CD4-positive, alpha-beta memory T cell (primary cell): ENCODE measurements at regions of chr20 and their contacts with region 1.

Region 1: DNA sequence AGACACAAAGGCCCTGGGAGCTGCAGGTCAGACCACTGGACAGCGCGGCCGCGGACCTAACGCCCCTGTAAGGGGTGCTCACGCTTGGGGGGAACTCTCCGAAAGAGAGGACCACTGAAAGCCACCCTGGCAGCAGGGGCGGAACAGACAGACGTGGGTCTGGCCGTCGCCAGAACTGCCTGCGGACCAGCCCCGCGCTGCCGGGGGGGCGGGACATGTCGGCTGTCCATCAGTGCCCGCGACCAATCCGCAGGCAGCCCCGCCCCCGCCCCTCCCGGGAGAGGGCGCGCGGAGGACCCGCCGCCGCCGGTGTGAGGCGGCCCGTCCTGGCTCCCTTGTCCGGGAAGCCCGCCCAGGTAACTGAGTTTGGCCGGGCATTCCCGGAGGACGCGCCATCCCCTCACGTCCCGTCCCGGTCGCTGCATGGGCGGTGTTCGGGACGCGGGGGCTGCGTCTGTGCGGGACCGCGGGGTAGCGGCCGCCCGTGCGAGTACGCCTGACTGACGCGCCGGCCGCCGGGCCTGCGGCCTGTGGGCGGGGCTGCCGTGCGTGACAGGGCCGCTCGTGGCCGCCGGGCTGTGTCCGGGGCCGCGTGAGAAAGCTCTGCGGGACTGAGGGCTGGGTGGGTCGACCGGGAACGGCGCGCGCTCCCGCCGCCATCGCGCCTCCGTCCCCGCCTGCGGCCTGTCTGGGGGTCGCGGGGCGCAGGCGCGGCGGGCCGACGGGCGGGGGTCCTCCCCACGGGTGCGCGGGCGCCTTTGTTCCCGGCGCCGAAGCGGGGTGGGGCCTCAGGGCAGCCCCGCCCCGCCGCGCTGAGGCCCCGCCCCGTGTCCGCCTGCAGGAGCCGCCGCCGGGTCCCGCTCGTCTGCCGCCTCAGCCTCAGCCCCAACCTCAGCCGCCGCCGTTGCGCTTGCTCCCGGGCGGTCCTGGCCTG is at the start of gene PLCG1:
- DNase-seq: peak; percentile 79 to 87 (median 82)
- H3K4me3 ChIP-seq: peak within 1 kb of the TSS; percentile 82
- H3K4me3 Mint-ChIP-seq: peak within 1 kb of the TSS; percentile 93 to 99 (median 96)
- H3K27ac ChIP-seq: peak within 1 kb of the TSS; percentile 84
- H3K27ac Mint-ChIP-seq: peak within 1 kb of the TSS; percentile 89 to 98 (median 95)
- H3K4me1 ChIP-seq: peaks cover 65% of the 10 kb centered on the region
- H3K4me1 Mint-ChIP-seq: peaks cover 43 to 70% (median 62%) of the 10 kb centered on the region in 4 donors
- H3K27me3 ChIP-seq: no peaks in the 10 kb centered on the region
- H3K27me3 Mint-ChIP-seq: no peaks in the 10 kb centered on the region
- total RNA-seq, gene PLCG1: 319 to 320 TPM

Region 2: DNA sequence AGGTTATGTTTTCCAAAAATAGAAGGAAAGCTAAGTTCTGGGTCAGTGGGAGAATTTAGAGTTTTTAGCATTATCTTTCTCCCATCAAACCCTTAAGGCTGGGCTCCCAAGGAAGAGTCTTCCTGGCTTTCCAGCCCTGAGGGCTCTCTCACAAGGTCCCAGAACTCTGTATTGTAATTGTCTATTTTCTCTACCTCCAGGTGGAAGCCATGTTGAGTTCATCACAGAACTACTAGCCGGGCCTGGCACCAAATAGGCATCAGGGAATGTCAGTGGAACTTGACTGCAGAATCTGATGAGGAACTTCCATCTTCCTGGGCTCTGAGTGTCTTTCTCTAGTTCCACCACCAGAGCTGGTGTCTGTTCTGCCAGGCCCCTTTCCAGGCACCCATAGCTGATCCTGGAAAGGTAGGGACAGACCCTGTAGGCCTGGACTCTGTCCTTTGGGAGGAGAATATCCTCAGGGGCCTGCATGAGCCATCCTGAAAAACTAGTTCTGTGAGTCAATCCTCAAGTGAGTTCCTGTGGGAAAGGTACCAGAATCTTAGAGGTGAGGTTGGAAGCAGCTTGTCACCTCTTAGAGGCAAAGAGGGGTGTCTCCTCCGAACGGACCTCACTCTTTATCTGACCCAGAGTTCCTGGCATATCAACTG is 119.4 kb before region 1 on chr20:
- CTCF ChIA-PET with region 1: no interaction called
- POLR2A ChIA-PET with region 1: no interaction called
- intact Hi-C with region 1: no loop called
- DNase-seq: no peak
- H3K4me3 ChIP-seq: no peak overlapping the region
- H3K4me3 Mint-ChIP-seq: no peak overlapping the region
- H3K27ac ChIP-seq: no peak overlapping the region
- H3K27ac Mint-ChIP-seq: no peak overlapping the region
- H3K4me1 ChIP-seq: no peaks in the 10 kb centered on the region
- H3K4me1 Mint-ChIP-seq: peaks cover 0 to 5% (median 3%) of the 10 kb centered on the region in 4 donors
- H3K27me3 ChIP-seq: no peaks in the 10 kb centered on the region
- H3K27me3 Mint-ChIP-seq: peaks cover 0 to 3% of the 10 kb centered on the region in 2 donors

Region 3: GRCh38 chr20:41057999-41058896 is 78.7 kb before region 1 on chr20:
- CTCF ChIA-PET with region 1: no interaction called
- POLR2A ChIA-PET with region 1: no interaction called
- intact Hi-C with region 1: no loop called
- DNase-seq: no peak
- H3K4me3 ChIP-seq: no peak overlapping the region
- H3K4me3 Mint-ChIP-seq: no peak overlapping the region
- H3K27ac ChIP-seq: no peak overlapping the region
- H3K27ac Mint-ChIP-seq: peak overlapping the region in 1 of 7 donors; percentile 60
- H3K4me1 ChIP-seq: peaks cover 30% of the 10 kb centered on the region
- H3K4me1 Mint-ChIP-seq: peaks cover 45 to 75% (median 60%) of the 10 kb centered on the region in 4 donors
- H3K27me3 ChIP-seq: no peaks in the 10 kb centered on the region
- H3K27me3 Mint-ChIP-seq: no peaks in the 10 kb centered on the region

Region 4: DNA sequence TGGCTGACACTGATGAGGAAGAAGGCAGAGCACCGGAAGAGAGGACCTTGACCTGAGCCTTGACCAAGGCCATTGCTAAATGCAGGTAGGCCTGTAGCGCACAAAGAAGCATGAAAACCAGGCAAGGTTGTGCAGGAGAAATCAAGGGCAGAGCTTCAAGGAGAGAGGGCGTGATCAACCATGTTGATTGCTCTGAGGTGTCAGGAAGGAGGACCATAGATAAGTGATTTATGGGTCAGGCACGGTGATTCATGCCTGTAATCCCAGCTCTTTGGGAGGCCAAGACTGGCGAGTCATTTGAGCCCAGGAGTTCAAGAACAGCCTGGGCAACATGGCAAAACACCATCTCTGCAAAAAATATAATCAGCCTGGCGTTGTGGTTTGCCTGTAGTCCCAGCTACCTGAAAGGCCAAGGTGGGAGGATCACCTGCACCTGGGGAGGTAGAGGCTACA is 12.8 kb after region 1 on chr20:
- CTCF ChIA-PET with region 1: interaction called, 178 read pairs
- POLR2A ChIA-PET with region 1: interaction called, 753 read pairs
- intact Hi-C with region 1: loop called (anchors 1 kb)
- DNase-seq: peak in 1 of 5 donors; percentile 38
- H3K4me3 ChIP-seq: no peak overlapping the region
- H3K4me3 Mint-ChIP-seq: peak overlapping the region in 7 of 8 donors; percentile 32 to 97 (median 63)
- H3K27ac ChIP-seq: peak overlapping the region; percentile 46
- H3K27ac Mint-ChIP-seq: peak overlapping the region; percentile 92 to 98 (median 96)
- H3K4me1 ChIP-seq: peaks cover 100% of the 10 kb centered on the region
- H3K4me1 Mint-ChIP-seq: peaks cover 84 to 100% (median 92%) of the 10 kb centered on the region in 4 donors
- H3K27me3 ChIP-seq: no peaks in the 10 kb centered on the region
- H3K27me3 Mint-ChIP-seq: no peaks in the 10 kb centered on the region

Region 5: GRCh38 chr20:41167481-41168253 is 30.7 kb after region 1 on chr20:
- CTCF ChIA-PET with region 1: interaction called, 69 read pairs
- POLR2A ChIA-PET with region 1: interaction called, 22 read pairs
- intact Hi-C with region 1: no loop called
- DNase-seq: no peak
- H3K4me3 ChIP-seq: no peak overlapping the region
- H3K4me3 Mint-ChIP-seq: no peak overlapping the region
- H3K27ac ChIP-seq: peak overlapping the region; percentile 22
- H3K27ac Mint-ChIP-seq: peak overlapping the region; percentile 36 to 98 (median 73)
- H3K4me1 ChIP-seq: peaks cover 16% of the 10 kb centered on the region
- H3K4me1 Mint-ChIP-seq: peaks cover 5 to 58% (median 32%) of the 10 kb centered on the region in 4 donors
- H3K27me3 ChIP-seq: no peaks in the 10 kb centered on the region
- H3K27me3 Mint-ChIP-seq: no peaks in the 10 kb centered on the region

Region 6: DNA sequence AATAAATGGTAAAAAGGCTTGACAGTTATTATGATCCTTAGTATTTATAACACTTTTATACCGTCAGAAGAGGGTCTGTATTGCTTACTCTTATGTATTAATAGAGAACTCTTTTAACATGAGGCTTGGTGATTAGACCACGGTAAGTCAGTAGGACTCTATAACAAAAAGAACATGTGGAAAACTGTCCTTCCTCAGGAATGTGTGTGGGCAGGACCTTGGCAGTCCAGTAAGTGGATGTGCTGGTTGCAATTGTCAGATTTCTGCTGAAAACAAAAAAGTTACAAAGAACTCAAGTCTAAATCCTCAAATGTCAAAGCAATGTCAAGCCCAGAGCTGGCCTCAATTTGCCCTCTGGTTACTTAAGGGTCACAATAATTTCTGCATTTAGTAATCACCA is 81.5 kb after region 1 on chr20:
- CTCF ChIA-PET with region 1: interaction called, 42 read pairs
- POLR2A ChIA-PET with region 1: interaction called, 3 read pairs
- intact Hi-C with region 1: no loop called
- DNase-seq: no peak
- H3K4me3 ChIP-seq: no peak overlapping the region
- H3K4me3 Mint-ChIP-seq: no peak overlapping the region
- H3K27ac ChIP-seq: no peak overlapping the region
- H3K27ac Mint-ChIP-seq: no peak overlapping the region
- H3K4me1 ChIP-seq: no peaks in the 10 kb centered on the region
- H3K4me1 Mint-ChIP-seq: no peaks in the 10 kb centered on the region
- H3K27me3 ChIP-seq: no peaks in the 10 kb centered on the region
- H3K27me3 Mint-ChIP-seq: no peaks in the 10 kb centered on the region

Region 7: GRCh38 chr20:41242807-41243206 is 105.9 kb after region 1 on chr20:
- CTCF ChIA-PET with region 1: interaction called, 22 read pairs
- POLR2A ChIA-PET with region 1: no interaction called
- intact Hi-C with region 1: no loop called
- DNase-seq: no peak
- H3K4me3 ChIP-seq: no peak overlapping the region
- H3K4me3 Mint-ChIP-seq: peak overlapping the region in 1 of 8 donors; percentile 10
- H3K27ac ChIP-seq: no peak overlapping the region
- H3K27ac Mint-ChIP-seq: no peak overlapping the region
- H3K4me1 ChIP-seq: peaks cover 9% of the 10 kb centered on the region
- H3K4me1 Mint-ChIP-seq: peaks cover 5 to 11% (median 9%) of the 10 kb centered on the region in 4 donors
- H3K27me3 ChIP-seq: no peaks in the 10 kb centered on the region
- H3K27me3 Mint-ChIP-seq: no peaks in the 10 kb centered on the region

Region 8: DNA sequence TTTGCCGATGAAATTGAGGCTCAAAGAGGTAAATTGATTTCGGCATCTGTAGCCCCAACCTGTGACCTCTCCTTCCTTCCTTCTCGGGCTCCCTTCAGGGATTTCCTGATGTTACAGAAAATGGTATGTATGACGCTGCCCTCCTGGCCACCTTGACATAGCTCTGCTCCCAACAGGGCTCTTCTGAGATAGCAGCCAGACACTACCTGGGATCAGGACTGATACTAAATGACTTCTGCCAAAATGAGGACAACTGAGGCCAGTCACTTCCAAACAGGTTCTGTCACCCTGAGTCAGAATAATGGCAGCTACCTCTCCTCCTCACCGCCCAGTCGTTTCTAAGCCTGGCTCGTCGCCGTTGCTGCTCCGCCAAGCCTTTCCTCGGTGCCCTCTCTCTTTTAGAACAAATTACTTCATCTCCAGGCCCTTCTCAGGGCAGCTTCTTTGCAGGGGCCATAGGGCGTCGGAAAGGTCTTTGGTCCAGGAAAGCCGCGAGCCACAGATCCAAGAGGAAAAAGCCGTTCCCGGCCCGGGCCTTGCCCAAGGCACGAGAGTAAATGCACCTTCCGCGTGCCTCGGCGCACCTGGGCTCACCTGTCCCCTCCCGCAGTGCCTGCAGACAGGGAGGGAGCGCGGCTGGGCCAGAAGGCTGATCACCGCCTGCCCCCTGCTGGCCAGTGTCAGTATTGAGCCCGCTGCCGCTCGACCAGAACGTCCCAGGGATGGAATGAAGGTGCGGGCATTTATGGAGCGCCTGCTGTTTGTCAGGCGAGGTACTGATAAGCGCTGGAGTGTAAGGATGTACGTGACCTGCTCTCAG is 202.8 kb after region 1 on chr20:
- CTCF ChIA-PET with region 1: interaction called, 102 read pairs
- POLR2A ChIA-PET with region 1: interaction called, 4 read pairs
- intact Hi-C with region 1: loop called (anchors 1 kb)
- DNase-seq: peak; percentile 76 to 86 (median 81)
- H3K4me3 ChIP-seq: peak overlapping the region in 1 of 2 donors; percentile 24
- H3K4me3 Mint-ChIP-seq: peak overlapping the region; percentile 60 to 85 (median 78)
- H3K27ac ChIP-seq: no peak overlapping the region
- H3K27ac Mint-ChIP-seq: peak overlapping the region in 4 of 7 donors; percentile 18 to 62 (median 53)
- H3K4me1 ChIP-seq: peaks cover 10% of the 10 kb centered on the region
- H3K4me1 Mint-ChIP-seq: peaks cover 5 to 13% (median 8%) of the 10 kb centered on the region in 4 donors
- H3K27me3 ChIP-seq: no peaks in the 10 kb centered on the region
- H3K27me3 Mint-ChIP-seq: peaks cover 1 to 7% of the 10 kb centered on the region in 2 donors